MCF 10A (cell line): ENCODE measurements at regions of chr19 and their contacts with region 1.

Region 1: GRCh38 chr19:42108527-42109389 is 23.5 kb downstream of the POU2F2 start:
- DNase-seq: peak; percentile 90
- H3K4me3 Mint-ChIP-seq: no peak overlapping the region
- H3K27ac Mint-ChIP-seq: no peak overlapping the region
- H3K4me1 Mint-ChIP-seq: peaks cover 26% of the 10 kb centered on the region
- H3K27me3 Mint-ChIP-seq: peaks cover 20% of the 10 kb centered on the region
- CTCF ChIP-seq: peak; percentile 99

Region 2: GRCh38 chr19:42132851-42133528 is 24.2 kb after region 1 on chr19:
- CTCF ChIA-PET with region 1: interaction called, 31 read pairs
- POLR2A ChIA-PET with region 1: interaction called, 12 read pairs
- intact Hi-C with region 1: loop called (anchors 1 kb)
- DNase-seq: peak; percentile 57
- H3K4me3 Mint-ChIP-seq: peak overlapping the region; percentile 47
- H3K27ac Mint-ChIP-seq: no peak overlapping the region
- H3K4me1 Mint-ChIP-seq: peaks cover 15% of the 10 kb centered on the region
- H3K27me3 Mint-ChIP-seq: peaks cover 8% of the 10 kb centered on the region
- CTCF ChIP-seq: peak; percentile 98

Region 3: DNA sequence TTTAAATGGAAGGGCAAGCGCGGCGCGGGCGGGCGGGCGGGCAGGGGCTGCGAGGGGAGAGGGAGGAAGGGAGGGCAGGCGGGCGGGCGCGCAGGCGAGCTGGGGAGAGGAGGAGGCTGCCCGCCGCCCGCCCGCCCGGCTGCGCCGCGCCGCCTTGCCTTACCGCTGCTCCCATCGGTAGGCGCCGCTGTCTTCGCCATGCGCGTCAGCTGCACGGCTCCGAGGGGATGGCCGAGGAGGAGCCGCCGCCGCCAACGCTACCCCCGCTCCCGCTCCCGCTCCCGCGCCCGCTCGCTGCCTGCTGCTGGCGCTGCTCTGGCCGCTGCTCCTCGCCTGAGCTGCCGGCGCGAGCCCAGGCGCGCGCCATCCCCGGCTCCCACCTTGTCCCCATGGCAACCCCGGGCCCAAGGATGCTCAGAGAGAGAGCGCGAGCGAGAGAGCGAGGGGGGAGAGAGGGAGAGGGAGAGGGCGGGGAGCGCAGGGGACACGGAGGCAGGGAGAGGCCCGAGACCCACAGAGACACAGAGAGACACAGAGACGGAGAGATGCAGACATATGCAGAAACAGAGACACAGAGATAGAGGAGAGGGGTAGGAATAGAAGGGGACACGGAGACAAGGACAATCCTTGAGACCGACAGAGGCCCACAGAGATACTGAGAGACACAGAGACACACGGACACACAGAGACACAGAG is 68.4 kb after region 1 on chr19:
- CTCF ChIA-PET with region 1: interaction called, 22 read pairs
- POLR2A ChIA-PET with region 1: interaction called, 3 read pairs
- intact Hi-C with region 1: no loop called
- DNase-seq: peak; percentile 61
- H3K4me3 Mint-ChIP-seq: no peak overlapping the region
- H3K27ac Mint-ChIP-seq: no peak overlapping the region
- H3K4me1 Mint-ChIP-seq: peaks cover 8% of the 10 kb centered on the region
- H3K27me3 Mint-ChIP-seq: peaks cover 30% of the 10 kb centered on the region
- CTCF ChIP-seq: peak; percentile 43

Region 4: DNA sequence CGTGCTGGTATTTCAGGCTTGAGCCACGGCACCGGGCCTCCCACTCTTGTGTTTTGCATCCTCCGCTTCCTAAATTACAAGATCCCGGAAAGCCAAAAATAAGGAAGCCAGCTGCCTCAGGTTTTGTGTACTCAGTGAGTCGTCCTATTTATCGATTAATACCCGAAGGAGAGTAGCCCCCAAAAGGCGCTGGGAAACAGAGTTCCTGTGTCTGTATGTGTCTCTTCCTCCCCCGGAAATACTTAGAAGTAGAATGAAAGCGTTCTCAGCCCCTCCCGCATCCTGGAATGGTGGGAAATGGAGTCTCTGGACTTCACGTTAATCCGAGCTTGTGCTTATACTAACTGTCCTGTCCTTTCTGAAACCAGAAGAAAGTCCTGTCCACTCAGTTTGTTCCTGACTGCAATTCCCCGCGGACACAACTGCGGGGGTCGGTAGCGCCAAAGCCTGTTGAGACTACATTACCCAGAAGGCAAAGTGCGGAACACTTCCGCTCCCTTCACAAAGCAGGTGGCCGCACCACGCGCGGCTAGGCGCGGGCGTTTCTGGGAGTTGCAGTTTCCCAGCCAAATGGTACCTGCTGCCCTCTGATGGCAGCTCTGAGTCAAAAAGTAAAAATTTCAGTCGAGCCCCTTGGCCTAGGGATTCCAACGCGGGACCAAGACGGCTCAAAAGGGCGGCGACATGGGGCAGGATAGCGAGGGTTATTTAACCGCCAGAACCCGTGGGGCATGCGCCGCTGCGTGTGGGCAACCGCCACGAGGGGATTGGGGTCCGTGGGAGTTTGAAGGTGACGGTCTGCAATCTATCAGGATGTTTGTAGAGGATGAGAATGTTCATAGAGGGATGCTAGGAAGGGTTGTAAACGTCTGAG is 135.8 kb after region 1 on chr19:
- CTCF ChIA-PET with region 1: interaction called, 10 read pairs
- POLR2A ChIA-PET with region 1: interaction called, 4 read pairs
- intact Hi-C with region 1: loop called (anchors 1 kb)
- DNase-seq: peak; percentile 97
- H3K4me3 Mint-ChIP-seq: peak overlapping the region; percentile 79
- H3K27ac Mint-ChIP-seq: peak overlapping the region; percentile 81
- H3K4me1 Mint-ChIP-seq: peaks cover 37% of the 10 kb centered on the region
- H3K27me3 Mint-ChIP-seq: no peaks in the 10 kb centered on the region
- CTCF ChIP-seq: peak; percentile 60

Region 5: DNA sequence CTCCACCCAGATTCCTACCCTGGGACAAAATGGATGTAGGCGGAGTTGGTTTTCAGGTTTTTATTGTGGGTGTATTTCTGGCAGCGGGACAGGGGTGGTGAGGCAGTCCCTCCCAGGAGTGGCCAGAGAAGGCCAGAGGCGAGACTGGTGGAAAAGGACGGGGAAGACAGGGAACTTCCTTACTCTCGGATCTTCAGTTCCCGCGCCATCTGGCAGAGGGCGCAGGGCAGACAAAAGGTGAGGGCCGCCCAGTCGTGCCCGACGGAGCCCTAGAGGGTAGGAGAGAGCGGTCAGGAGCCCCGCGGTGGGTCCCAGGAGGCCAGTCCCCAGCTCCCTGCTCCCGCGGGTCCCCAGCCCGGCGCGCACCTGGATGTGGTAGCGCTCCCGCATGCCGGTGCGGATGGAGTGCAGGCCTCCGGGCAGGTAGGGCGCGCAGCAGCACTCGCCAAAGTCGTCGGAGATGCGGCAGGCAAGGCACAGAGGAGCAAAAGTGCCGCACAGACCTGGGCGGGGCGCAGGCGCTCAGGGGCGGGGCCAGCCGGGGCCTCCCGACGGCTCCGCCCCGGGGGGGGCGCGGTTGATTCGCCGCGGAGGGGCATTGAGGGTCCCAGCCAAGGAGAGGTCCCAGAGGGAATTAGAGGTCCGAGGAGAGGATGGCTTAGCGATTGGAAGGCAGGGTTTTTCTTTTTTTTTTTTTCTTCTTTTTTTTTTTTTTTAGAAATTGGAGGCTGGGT is 278.4 kb after region 1 on chr19:
- CTCF ChIA-PET with region 1: no interaction called
- POLR2A ChIA-PET with region 1: no interaction called
- intact Hi-C with region 1: no loop called
- DNase-seq: peak; percentile 87
- H3K4me3 Mint-ChIP-seq: peak overlapping the region; percentile 74
- H3K27ac Mint-ChIP-seq: peak overlapping the region; percentile 69
- H3K4me1 Mint-ChIP-seq: peaks cover 10% of the 10 kb centered on the region
- H3K27me3 Mint-ChIP-seq: peaks cover 30% of the 10 kb centered on the region
- CTCF ChIP-seq: peak; percentile 61

Region 6: DNA sequence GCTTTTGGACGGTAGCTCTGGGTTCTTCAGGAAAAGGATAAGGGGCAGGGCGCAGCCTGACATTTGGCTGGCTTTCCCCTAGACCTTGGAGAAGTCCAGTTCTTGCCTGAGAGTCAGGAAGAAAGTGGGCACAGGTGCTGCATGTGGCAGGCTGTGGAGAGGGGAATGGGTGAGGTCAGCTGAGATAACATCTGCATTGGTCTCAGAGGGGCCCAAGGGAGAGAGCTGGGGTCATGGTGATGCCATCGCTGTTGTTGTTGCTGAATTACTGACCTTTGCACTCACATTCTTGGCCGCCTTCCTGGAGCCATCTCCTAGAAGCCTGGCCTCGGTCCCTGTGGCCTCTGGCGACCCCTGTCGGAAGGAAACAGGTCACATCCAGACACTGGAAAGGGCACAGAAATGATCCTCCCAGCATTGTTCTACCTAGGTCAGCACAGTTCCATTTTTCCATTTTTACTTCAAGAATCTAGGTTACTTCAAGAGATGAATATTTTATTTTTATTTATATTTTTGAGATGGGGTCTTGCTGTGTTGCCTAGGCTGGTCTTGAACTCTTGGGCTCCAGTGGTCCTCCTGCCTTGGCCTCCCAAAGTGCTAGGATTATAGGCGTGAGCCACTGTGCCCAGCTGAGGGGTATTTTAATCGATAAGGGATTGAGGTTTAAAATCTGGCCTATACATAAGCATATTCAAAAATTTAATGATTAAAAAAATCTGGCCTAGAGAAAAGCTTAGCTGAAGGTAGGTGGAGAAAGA is 324.9 kb after region 1 on chr19:
- CTCF ChIA-PET with region 1: interaction called, 4 read pairs
- POLR2A ChIA-PET with region 1: no interaction called
- intact Hi-C with region 1: loop called (anchors 1 kb)
- DNase-seq: peak; percentile 90
- H3K4me3 Mint-ChIP-seq: no peak overlapping the region
- H3K27ac Mint-ChIP-seq: no peak overlapping the region
- H3K4me1 Mint-ChIP-seq: peaks cover 11% of the 10 kb centered on the region
- H3K27me3 Mint-ChIP-seq: no peaks in the 10 kb centered on the region
- CTCF ChIP-seq: peak; percentile 77